ENCODE measurements at regions of chr2 and their contacts with region 1.

Region 1: DNA sequence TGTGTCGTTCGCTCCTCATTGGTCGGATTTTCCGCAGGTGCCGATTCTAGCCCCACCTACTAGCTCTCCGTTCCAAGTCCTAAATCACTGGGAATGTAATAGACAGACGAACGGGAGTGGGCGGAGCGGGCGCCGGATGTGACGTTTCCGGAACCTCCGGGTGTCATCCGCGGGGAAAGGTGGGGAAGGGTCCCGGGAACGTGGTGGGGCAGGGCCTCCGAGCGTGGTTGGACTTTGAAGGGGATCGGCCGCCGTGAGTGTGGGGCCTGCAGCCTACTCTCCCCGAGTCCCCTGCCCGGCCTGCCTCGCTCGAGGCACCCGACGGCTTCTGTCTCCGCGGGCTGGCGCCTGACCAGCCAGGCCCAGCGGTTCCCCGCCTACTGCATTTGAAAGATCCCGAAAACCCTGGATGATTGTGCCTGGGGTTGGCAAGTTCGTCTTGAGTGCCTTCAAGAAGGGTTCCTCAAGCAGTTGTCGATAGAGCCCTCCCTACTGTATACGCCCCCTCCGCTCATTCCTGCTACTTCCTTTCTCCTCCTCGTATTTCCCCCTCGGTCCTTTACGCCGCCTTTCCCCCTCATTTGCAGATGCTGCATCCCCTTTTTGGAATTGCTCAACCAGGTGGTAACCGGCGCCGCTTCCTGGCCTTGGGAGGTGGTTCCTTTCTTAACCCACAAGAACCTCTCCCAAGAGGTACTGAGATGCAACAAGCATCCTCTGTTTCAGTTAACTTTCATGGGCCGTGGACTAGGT is at the start of gene STAMBP:
- DNase-seq: peak; percentile 94
- ATAC-seq: peak; percentile 94
- H3K4me3 ChIP-seq: peak within 1 kb of the TSS; percentile 69 to 92 (median 78)
- H3K4me3 Mint-ChIP-seq: peak within 1 kb of the TSS; percentile 95
- H3K27ac ChIP-seq: peak within 1 kb of the TSS; percentile 78 to 91
- H3K27ac Mint-ChIP-seq: peak within 1 kb of the TSS; percentile 96
- H3K4me1 ChIP-seq: peaks cover 19% of the 10 kb centered on the region in 2 donors
- H3K4me1 Mint-ChIP-seq: peaks cover 40% of the 10 kb centered on the region
- H3K27me3 ChIP-seq: no peaks in the 10 kb centered on the region
- H3K27me3 Mint-ChIP-seq: no peaks in the 10 kb centered on the region
- CTCF ChIP-seq: no peak
- total RNA-seq, gene STAMBP: 32.5 and 35.8 TPM in 2 replicates

Region 2: DNA sequence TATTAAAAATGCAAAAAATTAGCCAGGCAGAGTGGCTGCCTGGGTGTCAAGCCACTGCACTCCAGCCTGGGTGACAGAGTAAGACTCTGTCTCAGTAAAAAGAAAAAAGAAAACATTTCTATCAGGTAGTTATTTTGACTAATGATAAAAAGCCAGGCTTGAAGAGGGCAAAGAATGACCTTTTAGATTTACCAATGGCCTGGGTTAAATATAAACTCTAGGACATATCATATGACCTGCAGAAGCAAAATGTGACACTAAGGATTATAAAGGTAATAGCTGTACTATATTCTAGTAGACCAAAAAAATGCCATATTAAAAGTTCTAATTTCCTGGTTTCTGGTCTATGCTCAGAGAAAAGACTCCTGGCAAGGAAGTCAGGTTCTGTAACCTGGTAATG is 16.4 kb before region 1 on chr2:
- CTCF ChIA-PET with region 1: interaction called, 10 read pairs
- POLR2A ChIA-PET with region 1: no interaction called
- intact Hi-C with region 1: no loop called
- DNase-seq: no peak
- ATAC-seq: no peak
- H3K4me3 ChIP-seq: no peak overlapping the region
- H3K4me3 Mint-ChIP-seq: no peak overlapping the region
- H3K27ac ChIP-seq: no peak overlapping the region
- H3K27ac Mint-ChIP-seq: no peak overlapping the region
- H3K4me1 ChIP-seq: no peaks in the 10 kb centered on the region
- H3K4me1 Mint-ChIP-seq: no peaks in the 10 kb centered on the region
- H3K27me3 ChIP-seq: peaks cover 0 to 7% (median 0%) of the 10 kb centered on the region in 4 experiments
- H3K27me3 Mint-ChIP-seq: peaks cover 13% of the 10 kb centered on the region
- CTCF ChIP-seq: no peak

Region 3: DNA sequence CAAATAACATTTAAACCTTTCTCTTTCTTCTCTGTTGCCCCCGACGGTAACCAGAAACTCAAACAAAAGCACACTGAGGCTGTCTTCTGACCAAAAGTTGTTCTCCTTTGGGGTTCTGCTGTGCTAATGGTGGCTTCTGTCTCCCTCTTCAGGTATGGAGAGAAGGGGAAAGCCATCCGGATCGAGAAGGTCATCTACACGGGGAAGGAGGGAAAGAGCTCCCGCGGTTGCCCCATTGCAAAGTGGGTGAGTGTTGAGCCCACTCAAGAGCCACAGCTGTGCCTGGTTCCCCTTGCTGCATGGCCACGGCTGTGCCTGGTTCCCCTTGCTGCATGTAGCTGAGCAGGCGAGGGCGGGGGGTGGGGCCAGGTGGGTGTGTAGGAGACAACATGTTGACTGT is 251.4 kb after region 1 on chr2:
- CTCF ChIA-PET with region 1: interaction called, 14 read pairs
- POLR2A ChIA-PET with region 1: no interaction called
- intact Hi-C with region 1: no loop called
- DNase-seq: no peak
- ATAC-seq: peak; percentile 46
- H3K4me3 ChIP-seq: no peak overlapping the region
- H3K4me3 Mint-ChIP-seq: no peak overlapping the region
- H3K27ac ChIP-seq: no peak overlapping the region
- H3K27ac Mint-ChIP-seq: peak overlapping the region; percentile 81
- H3K4me1 ChIP-seq: peaks cover 3 to 6% of the 10 kb centered on the region in 2 donors
- H3K4me1 Mint-ChIP-seq: peaks cover 14% of the 10 kb centered on the region
- H3K27me3 ChIP-seq: no peaks in the 10 kb centered on the region
- H3K27me3 Mint-ChIP-seq: no peaks in the 10 kb centered on the region
- CTCF ChIP-seq: peak; percentile 19

Region 4: DNA sequence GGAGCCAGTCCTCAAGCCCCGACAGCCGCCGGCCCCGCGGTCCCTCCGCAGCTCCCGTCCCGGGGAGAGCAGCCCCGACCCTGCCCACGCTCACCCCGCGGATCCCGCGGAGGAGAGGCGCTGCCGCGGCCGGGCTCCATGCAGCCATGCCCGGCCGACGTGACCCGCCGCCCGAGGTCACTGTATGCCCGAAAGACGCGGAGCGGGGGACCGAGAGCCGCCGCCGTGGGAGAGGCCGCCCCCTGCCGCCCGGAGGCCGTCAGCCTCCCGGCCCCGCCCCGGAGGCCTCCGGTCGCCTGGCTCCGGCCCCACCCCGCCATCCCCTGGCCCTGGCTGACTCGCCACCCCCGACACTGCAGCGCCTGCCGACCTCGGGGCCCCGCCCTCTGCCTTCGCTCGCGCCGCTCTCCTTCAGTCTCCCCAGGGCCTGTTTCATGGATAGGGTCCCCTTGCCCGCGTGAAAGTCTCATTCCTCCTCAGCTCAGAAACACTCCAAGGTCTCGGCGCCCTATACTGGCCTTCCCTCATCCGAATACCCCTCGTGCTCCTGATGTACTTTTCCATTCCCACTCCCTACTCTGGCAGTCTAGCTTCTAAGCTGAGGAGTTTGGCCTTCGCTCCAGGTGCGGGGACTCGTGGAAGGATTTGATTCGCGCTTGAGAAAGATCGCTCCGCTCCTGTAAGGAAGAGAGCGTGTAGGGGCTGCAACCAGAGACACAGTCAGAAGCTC is 318.9 kb after region 1 on chr2 and contains the start of gene BOLA3:
- CTCF ChIA-PET with region 1: interaction called, 63 read pairs
- POLR2A ChIA-PET with region 1: interaction called, 3 read pairs
- intact Hi-C with region 1: loop called (anchors 1 kb)
- DNase-seq: peak; percentile 88
- ATAC-seq: peak; percentile 98
- H3K4me3 ChIP-seq: peak within 1 kb of the TSS; percentile 58 to 92 (median 67)
- H3K4me3 Mint-ChIP-seq: no peak within 1 kb of the TSS
- H3K27ac ChIP-seq: peak within 1 kb of the TSS; percentile 38 to 56
- H3K27ac Mint-ChIP-seq: no peak within 1 kb of the TSS
- H3K4me1 ChIP-seq: peaks cover 16 to 20% of the 10 kb centered on the region in 2 donors
- H3K4me1 Mint-ChIP-seq: peaks cover 9% of the 10 kb centered on the region
- H3K27me3 ChIP-seq: no peaks in the 10 kb centered on the region
- H3K27me3 Mint-ChIP-seq: no peaks in the 10 kb centered on the region
- CTCF ChIP-seq: peak; percentile 80
- total RNA-seq, gene BOLA3: 6.5 and 7.5 TPM in 2 replicates

Region 5: DNA sequence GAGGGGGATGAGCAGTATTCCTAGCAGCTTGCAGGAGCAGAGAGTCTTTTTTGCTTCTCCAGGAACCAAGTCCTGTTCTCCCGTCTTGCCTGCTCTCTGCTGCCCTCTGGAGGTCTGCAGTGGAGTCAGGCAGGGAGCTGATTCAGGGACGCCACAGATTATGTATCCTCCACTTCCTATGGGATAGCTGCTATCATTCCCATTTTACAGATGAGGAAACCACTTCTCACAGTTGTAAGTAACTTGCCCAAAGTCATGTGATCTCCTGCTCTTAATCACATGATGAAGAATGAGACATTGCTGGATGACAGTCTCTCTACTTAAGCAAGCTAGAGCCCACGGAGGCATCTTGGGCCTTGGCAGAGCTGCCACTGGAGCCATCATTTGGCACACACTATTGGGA is 505.9 kb after region 1 on chr2:
- CTCF ChIA-PET with region 1: interaction called, 191 read pairs
- POLR2A ChIA-PET with region 1: no interaction called
- intact Hi-C with region 1: loop called (anchors 1 kb)
- DNase-seq: peak; percentile 76
- ATAC-seq: peak; percentile 74
- H3K4me3 ChIP-seq: no peak overlapping the region
- H3K4me3 Mint-ChIP-seq: no peak overlapping the region
- H3K27ac ChIP-seq: no peak overlapping the region
- H3K27ac Mint-ChIP-seq: no peak overlapping the region
- H3K4me1 ChIP-seq: no peaks in the 10 kb centered on the region
- H3K4me1 Mint-ChIP-seq: no peaks in the 10 kb centered on the region
- H3K27me3 ChIP-seq: no peaks in the 10 kb centered on the region
- H3K27me3 Mint-ChIP-seq: no peaks in the 10 kb centered on the region
- CTCF ChIP-seq: peak; percentile 100

Measured in B cell (primary cell).